Cardiac septum (tissue), 1 donor: ENCODE measurements at regions of chr5 and their contacts with region 1.

Region 1: DNA sequence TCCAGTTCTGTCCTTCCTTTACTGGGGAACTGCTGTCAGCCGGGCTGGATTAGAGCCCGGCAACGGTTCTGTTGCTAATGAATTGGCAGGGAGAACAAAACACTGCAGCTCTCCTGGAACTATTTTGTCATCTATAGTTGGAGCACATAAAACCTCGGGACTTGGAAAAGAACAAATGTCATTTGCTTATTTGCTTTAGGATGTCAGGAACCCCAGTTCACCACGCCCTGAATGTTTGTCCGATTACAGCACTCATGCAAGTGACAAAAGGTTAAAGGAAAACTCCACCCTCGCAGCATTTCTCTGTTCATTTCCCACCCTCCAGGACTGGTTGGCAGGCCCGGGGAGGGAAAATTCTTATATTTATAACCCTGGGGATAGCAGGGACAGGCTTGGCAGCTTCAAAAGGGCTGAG is 66.4 kb upstream of the PLPP1 start:
- DNase-seq: peak; percentile 84

Region 2: DNA sequence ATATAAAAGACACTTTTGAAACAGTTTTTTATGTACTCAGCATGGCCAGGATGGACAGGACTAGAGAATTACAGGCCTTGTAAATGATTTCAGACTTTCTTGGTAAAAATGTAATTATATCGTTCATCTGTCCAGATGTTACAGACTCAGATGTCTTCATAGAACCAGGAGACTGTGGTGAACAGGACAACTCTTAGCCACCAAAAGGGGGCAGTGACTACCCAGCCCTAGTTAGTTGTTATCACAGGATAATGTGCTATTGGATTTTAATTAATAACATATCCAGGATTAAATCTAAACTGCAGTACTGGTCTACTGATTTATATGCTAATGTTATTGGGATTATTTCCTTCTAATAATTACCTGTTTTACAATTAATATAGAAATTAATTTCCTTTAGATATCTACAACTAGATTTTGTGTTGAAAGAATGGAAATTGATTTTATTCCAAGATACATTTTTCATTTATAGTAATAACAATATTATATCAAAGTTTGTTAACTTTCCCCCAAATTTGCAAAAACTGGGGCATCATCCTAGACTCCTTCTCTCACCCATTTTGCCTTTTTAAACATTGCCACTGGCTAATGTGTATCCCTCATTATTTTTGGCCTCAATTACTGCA is 194.0 kb before region 1 on chr5:
- intact Hi-C with region 1: loop called (anchors 5 kb)
- DNase-seq: no peak

Region 3: GRCh38 chr5:55439008-55439407 is 162.2 kb before region 1 on chr5:
- intact Hi-C with region 1: loop called (anchors 2 kb)
- DNase-seq: no peak

Region 4: GRCh38 chr5:55509796-55510522 is 91.3 kb before region 1 on chr5:
- intact Hi-C with region 1: no loop called
- DNase-seq: no peak

Region 5: DNA sequence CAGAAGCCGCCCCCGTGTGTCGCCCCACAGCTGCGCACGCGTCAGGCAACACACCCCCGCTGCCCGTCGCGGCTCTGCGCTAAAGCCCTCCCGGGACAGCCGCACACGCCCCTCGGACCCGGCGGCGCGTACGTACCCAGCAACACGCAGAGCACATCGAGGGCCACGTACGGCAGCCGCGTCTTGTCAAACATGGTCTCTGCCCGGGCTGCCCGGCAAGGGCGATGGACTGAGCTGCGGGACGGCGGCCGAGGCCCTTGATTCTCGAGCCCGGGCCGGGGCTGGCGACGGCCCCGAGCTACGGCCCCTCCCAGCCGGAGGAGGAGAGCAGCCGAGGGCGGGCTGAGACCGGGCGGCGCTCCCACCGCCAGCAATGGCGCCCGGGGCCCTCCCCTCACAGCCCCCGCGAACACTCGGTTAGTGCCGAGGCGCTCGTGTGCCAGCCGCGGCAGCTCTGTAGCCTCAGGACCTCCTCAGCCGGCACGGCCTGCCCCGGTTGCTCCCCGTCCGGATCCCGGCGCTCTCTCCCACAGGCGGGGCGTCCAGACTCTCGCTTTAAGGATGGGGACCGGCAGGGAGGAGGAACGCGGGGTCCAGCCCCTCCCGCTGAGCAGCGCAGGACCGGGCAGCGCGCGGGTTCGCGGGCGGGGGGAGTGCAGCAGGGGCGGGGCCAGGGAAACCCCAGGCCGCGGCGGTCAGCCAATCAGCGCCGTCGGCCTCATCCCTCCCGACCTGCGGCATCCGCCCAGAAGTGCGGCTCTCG is 66.6 kb before region 1 on chr5 and contains the start of gene PLPP1:
- intact Hi-C with region 1: loop called (anchors 1 kb)
- DNase-seq: peak; percentile 96
- total RNA-seq, gene PLPP1: 102 TPM

Region 6: GRCh38 chr5:55577353-55578060 is 23.7 kb before region 1 on chr5:
- intact Hi-C with region 1: loop called (anchors 1 kb)
- DNase-seq: no peak

Region 7: GRCh38 chr5:55636683-55637082 is 35.5 kb after region 1 on chr5:
- intact Hi-C with region 1: loop called (anchors 1 kb)
- DNase-seq: no peak

Region 8: DNA sequence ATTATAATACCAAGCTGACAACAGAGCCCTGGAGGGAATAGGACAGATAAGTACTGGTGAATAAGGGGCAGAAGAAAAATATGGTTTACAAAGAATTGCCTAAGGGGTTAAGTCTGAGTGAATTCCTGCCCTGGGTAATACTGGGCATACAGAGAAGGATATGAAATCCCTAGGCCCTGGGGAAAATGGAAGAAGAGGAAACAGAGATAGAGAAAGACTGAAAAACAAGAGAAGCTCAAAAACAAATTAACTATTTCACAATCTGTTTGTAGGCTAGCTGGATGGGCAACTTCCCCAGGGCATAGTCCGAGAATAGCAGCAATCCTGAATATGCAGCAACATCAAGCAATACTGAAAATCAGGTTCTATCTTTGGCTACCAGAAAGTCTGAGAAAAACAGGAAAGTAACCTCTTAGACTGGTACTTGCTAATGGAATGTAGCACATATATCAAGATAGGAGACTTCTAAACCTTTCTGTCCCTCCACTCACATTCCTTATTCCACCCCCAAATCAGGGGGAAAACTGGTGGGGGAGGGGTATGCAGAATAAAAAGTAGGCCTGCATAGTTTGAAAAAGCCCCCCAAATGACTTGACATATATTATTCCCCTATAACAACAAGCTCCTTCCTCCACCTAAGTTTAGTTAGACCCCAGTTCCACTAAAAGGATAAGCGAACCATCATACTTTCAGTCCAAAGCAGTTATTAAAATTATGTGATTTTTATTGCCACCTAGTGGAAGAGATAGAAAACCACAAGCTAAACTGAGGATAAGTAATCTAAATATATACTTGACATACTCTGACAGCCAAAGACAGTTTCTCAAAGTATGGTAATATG is 90.3 kb after region 1 on chr5:
- intact Hi-C with region 1: loop called (anchors 2 kb)
- DNase-seq: no peak